GM12878 (cell line): ENCODE measurements at regions of chr4 and their contacts with region 1.

Region 1: GRCh38 chr4:31370866-31371465 is 650.8 kb downstream of the PCDH7 start:
- DNase-seq: peak; percentile 4
- ATAC-seq: peak; percentile 97
- H3K4me3 ChIP-seq: no peak overlapping the region
- H3K27ac ChIP-seq: no peak overlapping the region
- H3K4me1 ChIP-seq: no peaks in the 10 kb centered on the region
- H3K27me3 ChIP-seq: no peaks in the 10 kb centered on the region
- CTCF ChIP-seq: peak; percentile 67 to 71 (median 70)
- EP300 ChIP-seq: no peak
- POLR2A ChIP-seq: no peak
- RAD21 ChIP-seq: peak; percentile 71

Region 2: GRCh38 chr4:31290836-31291610 is 79.9 kb before region 1 on chr4:
- CTCF ChIA-PET with region 1: no interaction called
- POLR2A ChIA-PET with region 1: no interaction called
- RAD21 ChIA-PET with region 1: no interaction called
- SMC1A ChIA-PET with region 1: no interaction called
- in situ Hi-C with region 1: no loop called
- intact Hi-C with region 1: no loop called
- DNase-seq: peak; percentile 9
- ATAC-seq: peak; percentile 94
- H3K4me3 ChIP-seq: peak overlapping the region; percentile 5; the same call in 1 of the 2 replicates
- H3K27ac ChIP-seq: peak overlapping the region; percentile 39; the same call in 1 of the 2 replicates
- H3K4me1 ChIP-seq: 0 out of 2 replicates have a peak, but pooled peaks cover 3% of the 10 kb centered on the region
- H3K27me3 ChIP-seq: no peaks in the 10 kb centered on the region
- CTCF ChIP-seq: no peak
- EP300 ChIP-seq: peak; percentile 41 to 51; a peak in 1 of 4 replicates
- POLR2A ChIP-seq: no peak
- RAD21 ChIP-seq: no peak

Region 3: DNA sequence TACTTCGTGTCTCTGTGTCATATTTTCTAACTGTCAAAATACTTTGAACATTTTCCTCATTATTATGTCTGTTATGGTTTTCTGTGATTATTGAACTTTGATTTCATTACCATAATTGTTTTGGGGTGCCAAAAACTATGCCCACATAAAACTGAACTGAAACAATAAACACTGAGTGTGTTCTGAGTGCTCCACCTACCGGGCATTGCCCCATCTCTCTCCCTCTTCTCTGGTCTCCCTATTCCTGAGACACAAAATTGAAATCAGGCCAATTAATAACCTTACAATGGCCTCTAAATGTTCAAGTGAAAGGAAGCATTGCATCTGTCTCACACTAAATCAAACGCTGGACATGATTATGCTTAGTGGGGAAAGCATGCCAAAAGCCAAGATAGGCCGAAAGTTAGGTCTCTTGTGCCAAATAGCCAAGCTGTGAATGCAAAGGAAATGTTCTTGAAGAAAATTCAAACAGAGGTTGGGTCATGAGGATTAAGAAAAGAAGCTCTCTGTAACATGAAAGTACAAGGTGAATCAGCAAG is 321.5 kb after region 1 on chr4:
- CTCF ChIA-PET with region 1: interaction called, 3 read pairs
- POLR2A ChIA-PET with region 1: no interaction called
- RAD21 ChIA-PET with region 1: no interaction called
- SMC1A ChIA-PET with region 1: interaction called, 3 read pairs
- in situ Hi-C with region 1: no loop called
- intact Hi-C with region 1: loop called (anchors 5 kb)
- DNase-seq: no peak
- ATAC-seq: peak; percentile 55
- H3K4me3 ChIP-seq: no peak overlapping the region
- H3K27ac ChIP-seq: no peak overlapping the region
- H3K4me1 ChIP-seq: no peaks in the 10 kb centered on the region
- H3K27me3 ChIP-seq: no peaks in the 10 kb centered on the region
- CTCF ChIP-seq: peak in 2 of 3 experiments; percentile 22 to 32; a peak in 2 of 6 replicates
- EP300 ChIP-seq: no peak
- POLR2A ChIP-seq: no peak
- RAD21 ChIP-seq: no peak